Activated CD8-positive, alpha-beta T cell treated with anti-CD3 and anti-CD28 coated beads, Interleukin-2, amount 10 ng/mL, durations not matched to agents 7 days and 5 days (primary cell): ENCODE measurements at regions of chr3 and their contacts with region 1.

Region 1: DNA sequence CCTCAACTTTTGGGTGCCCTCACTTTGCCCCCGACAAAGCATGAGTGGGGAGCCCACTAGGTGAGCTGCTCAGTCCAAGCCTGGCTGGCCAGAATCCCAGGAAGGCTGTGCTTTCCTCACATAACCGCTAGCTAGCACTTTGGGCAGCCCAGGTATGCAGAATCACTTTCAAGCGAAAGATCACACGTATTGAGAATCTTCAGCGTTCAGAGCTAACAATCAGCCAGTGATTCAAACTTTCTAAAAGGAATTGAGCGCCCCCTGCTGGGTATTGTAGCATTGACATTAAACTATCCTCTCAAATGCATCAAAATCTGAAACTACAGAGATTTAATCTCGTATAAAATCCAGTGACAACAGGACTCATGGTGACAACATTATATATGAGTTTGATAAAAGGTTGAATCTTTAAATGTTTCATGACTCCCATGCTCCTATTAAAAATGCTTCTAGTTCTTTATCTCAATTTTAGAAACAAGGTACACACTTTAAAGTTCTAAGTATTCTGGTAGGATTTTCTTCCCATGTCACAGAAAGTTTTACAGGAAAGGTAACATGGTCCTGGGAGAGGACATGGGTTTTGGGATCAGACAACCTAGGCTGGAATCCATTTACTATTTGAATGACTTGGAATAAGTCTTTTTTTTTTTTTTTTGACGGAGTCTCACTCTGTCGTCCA is 11.8 kb downstream of the ANAPC13 start:
- DNase-seq: peak; percentile 88
- ATAC-seq: peak; percentile 79
- H3K4me3 Mint-ChIP-seq: no peak overlapping the region
- H3K27ac Mint-ChIP-seq: no peak overlapping the region
- H3K4me1 Mint-ChIP-seq: no peaks in the 10 kb centered on the region
- H3K27me3 Mint-ChIP-seq: no peaks in the 10 kb centered on the region

Region 2: DNA sequence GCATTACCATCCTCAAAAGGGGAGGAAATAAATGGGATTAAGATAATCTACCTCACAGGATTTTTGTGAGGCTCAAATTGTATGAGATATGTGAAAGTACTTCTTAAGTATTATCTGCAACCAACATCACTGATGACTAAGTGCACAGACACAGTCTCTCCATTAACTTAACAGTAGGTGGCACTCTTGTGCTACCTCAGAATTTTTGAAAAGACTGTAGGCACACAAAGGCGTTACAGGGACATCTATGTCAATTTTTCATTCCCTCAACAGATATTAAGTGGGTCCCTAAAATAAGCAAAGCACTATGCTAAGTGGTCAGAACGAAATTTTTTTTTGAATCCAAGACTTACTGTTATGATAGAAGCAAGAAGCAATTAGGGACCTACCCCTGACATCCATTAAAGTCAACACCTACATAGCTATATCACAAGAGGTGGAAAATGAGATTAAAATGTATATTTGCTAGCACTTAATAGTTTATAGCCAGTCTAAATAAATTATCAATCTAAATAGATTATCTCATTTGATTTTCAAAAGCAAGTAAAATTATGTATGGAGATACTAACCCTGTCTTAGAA is 276.2 kb before region 1 on chr3:
- CTCF ChIA-PET with region 1: interaction called, 31 read pairs
- POLR2A ChIA-PET with region 1: no interaction called
- DNase-seq: peak; percentile 44
- ATAC-seq: peak; percentile 84
- H3K4me3 Mint-ChIP-seq: no peak overlapping the region
- H3K27ac Mint-ChIP-seq: no peak overlapping the region
- H3K4me1 Mint-ChIP-seq: peaks cover 2% of the 10 kb centered on the region
- H3K27me3 Mint-ChIP-seq: no peaks in the 10 kb centered on the region

Region 3: GRCh38 chr3:134294302-134295280 is 179.4 kb before region 1 on chr3:
- CTCF ChIA-PET with region 1: interaction called, 16 read pairs
- POLR2A ChIA-PET with region 1: no interaction called
- DNase-seq: peak; percentile 86
- ATAC-seq: peak; percentile 98
- H3K4me3 Mint-ChIP-seq: no peak overlapping the region
- H3K27ac Mint-ChIP-seq: no peak overlapping the region
- H3K4me1 Mint-ChIP-seq: no peaks in the 10 kb centered on the region
- H3K27me3 Mint-ChIP-seq: peaks cover 32% of the 10 kb centered on the region

Region 4: DNA sequence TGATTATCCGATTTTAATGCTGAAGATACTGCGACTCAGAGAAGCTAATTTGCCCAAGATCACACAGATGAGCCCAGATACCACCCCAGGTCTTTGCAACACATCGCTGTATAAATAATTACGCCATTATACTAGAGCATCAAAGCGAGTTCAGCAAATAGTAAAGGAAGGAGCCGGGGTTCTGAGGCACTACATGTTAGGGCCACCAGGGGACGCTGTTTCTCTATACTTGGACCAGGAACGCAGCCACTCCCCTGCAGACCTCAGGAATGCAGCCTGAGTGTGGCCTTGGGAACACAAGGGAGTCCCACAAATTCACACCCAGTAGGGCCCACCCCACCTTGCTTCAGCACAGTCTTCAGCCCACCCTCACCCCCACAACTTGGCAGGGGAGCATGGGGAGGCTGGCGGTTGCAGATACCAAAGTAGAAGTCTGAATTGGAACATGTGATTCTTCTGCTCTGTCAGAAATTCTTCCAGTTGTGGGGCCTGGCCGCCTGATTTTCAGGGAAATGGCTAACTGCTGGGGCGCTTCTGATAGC is 165.6 kb before region 1 on chr3:
- CTCF ChIA-PET with region 1: interaction called, 48 read pairs
- POLR2A ChIA-PET with region 1: no interaction called
- DNase-seq: peak; percentile 79
- ATAC-seq: peak; percentile 87
- H3K4me3 Mint-ChIP-seq: peak overlapping the region; percentile 16
- H3K27ac Mint-ChIP-seq: no peak overlapping the region
- H3K4me1 Mint-ChIP-seq: peaks cover 3% of the 10 kb centered on the region
- H3K27me3 Mint-ChIP-seq: peaks cover 55% of the 10 kb centered on the region

Region 5: GRCh38 chr3:134485718-134486576 is 11.9 kb after region 1 on chr3 and contains the starts of genes ANAPC13 and CEP63:
- CTCF ChIA-PET with region 1: interaction called, 43 read pairs
- POLR2A ChIA-PET with region 1: interaction called, 12 read pairs
- DNase-seq: peak; percentile 97
- ATAC-seq: peak; percentile 89
- H3K4me3 Mint-ChIP-seq: peak within 1 kb of the TSS; percentile 86
- H3K27ac Mint-ChIP-seq: peak within 1 kb of the TSS; percentile 96
- H3K4me1 Mint-ChIP-seq: peaks cover 39% of the 10 kb centered on the region
- H3K27me3 Mint-ChIP-seq: no peaks in the 10 kb centered on the region
- total RNA-seq, gene ANAPC13: 24.9 to 25.3 TPM
- total RNA-seq, gene CEP63: 26.5 to 27.7 TPM

Region 6: GRCh38 chr3:134536781-134537180 is 62.8 kb after region 1 on chr3:
- CTCF ChIA-PET with region 1: no interaction called
- POLR2A ChIA-PET with region 1: no interaction called
- DNase-seq: no peak
- ATAC-seq: no peak
- H3K4me3 Mint-ChIP-seq: no peak overlapping the region
- H3K27ac Mint-ChIP-seq: no peak overlapping the region
- H3K4me1 Mint-ChIP-seq: peaks cover 1% of the 10 kb centered on the region
- H3K27me3 Mint-ChIP-seq: no peaks in the 10 kb centered on the region